Activated naive CD4-positive, alpha-beta T cell treated with anti-CD3 and anti-CD28 coated beads for 36 hours (primary cell): ENCODE measurements at regions of chr5 and their contacts with region 1.

Region 1: DNA sequence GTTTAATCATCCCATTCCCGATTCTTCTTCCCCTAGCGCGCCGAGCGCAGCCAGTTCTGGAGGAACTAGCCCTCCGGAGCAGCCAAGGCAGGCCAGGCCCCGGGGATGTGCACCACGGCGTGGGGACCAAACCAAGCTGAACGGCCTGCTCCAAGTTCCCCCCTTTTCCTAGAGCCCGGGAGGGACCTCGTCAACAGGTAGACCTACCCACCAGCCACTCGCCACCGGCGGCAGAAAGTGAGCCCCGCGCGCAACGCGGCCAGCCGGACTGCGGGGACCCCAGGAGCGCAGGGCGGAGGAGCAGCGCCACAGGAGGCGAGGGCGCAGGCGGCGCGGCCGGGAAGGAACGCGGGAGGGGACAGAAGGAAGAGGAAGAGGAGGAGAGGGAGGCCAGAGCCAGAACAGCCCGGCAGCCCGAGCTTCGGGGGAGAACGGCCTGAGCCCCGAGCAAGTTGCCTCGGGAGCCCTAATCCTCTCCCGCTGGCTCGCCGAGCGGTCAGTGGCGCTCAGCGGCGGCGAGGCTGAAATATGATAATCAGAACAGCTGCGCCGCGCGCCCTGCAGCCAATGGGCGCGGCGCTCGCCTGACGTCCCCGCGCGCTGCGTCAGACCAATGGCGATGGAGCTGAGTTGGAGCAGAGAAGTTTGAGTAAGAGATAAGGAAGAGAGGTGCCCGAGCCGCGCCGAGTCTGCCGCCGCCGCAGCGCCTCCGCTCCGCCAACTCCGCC is at the start of gene ISL1:
- DNase-seq: no peak
- H3K4me3 Mint-ChIP-seq: peak within 1 kb of the TSS; percentile 19
- H3K27ac Mint-ChIP-seq: no peak within 1 kb of the TSS
- H3K4me1 Mint-ChIP-seq: peaks cover 16% of the 10 kb centered on the region
- H3K27me3 Mint-ChIP-seq: peaks cover 91% of the 10 kb centered on the region
- total RNA-seq, gene ISL1: not detected

Region 2: GRCh38 chr5:50727149-50727496 is 655.8 kb before region 1 on chr5:
- CTCF ChIA-PET with region 1: no interaction called
- intact Hi-C with region 1: no loop called
- DNase-seq: peak; percentile 66
- H3K4me3 Mint-ChIP-seq: peak overlapping the region; percentile 19
- H3K27ac Mint-ChIP-seq: peak overlapping the region; percentile 75
- H3K4me1 Mint-ChIP-seq: peaks cover 63% of the 10 kb centered on the region
- H3K27me3 Mint-ChIP-seq: no peaks in the 10 kb centered on the region

Region 3: DNA sequence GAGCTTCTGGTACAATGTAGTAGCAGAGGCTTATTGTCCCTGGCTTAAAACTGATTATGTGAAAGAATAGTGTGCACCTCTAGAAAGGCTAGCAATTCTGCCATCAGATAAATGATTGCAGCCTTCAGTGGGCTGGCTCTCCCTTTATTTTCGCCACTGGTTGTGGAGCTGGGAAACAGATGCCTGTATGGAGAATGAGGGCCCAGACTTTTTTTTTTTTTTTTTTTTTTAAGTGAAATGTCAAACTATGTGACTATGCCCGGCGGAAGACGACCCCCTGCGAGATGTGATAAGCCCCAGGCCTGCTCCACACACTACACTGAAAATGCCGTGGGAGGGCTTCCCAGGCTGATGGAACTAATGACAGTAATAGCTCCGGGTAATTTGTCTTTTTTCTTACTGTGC is 29.0 kb after region 1 on chr5:
- CTCF ChIA-PET with region 1: no interaction called
- intact Hi-C with region 1: no loop called
- DNase-seq: no peak
- H3K4me3 Mint-ChIP-seq: no peak overlapping the region
- H3K27ac Mint-ChIP-seq: no peak overlapping the region
- H3K4me1 Mint-ChIP-seq: no peaks in the 10 kb centered on the region
- H3K27me3 Mint-ChIP-seq: no peaks in the 10 kb centered on the region

Region 4: DNA sequence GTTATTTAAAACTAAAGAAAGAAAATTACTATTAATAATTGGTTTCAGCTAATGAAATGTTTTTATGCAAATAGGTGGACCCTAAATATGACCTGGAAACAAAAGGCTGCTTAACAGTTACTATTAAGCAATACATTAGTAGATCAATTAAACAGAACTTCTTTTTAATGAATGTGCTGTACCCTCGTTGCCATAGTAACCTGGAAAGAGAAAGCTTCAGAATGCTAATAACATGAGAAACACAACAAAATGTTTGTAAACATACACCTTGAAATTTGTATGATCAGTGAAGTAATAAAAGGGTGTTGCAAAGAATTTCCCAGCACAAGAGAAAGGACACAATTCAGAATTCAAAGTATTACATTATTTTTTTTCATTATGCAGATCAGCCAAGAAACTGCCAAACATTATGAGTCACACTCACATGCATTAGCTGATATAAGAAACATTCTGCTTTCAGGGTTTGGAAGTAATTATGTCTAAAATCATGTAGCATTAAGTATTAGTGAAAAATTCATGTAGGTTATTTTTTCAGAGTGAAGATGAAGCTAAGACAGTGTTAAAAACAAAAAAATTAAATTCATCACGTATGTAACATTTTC is 348.6 kb after region 1 on chr5:
- CTCF ChIA-PET with region 1: no interaction called
- intact Hi-C with region 1: no loop called
- DNase-seq: no peak
- H3K4me3 Mint-ChIP-seq: no peak overlapping the region
- H3K27ac Mint-ChIP-seq: no peak overlapping the region
- H3K4me1 Mint-ChIP-seq: no peaks in the 10 kb centered on the region
- H3K27me3 Mint-ChIP-seq: no peaks in the 10 kb centered on the region

Region 5: DNA sequence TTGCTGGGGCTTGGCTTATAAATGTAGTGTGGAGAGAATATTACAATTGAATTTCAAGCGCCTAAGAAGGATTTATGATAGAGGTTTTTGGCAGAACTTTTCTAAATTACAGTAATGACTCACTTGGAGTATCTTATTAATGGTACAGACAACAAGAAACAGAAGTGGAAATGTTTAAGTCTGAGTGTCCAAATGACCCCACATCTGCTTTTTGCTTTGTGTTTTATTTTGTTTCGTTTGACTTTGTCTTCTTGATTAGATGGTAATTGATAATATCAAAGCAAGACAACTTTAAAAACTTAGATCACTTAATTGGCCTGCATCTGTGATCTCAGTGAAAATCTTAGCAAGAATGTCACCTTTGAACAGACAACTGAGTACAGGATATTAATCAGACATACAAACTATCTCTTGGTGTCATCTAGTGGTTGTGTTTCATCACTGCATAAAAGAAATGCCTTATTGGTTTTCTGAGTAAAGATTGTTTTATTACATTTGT is 577.7 kb after region 1 on chr5:
- CTCF ChIA-PET with region 1: no interaction called
- intact Hi-C with region 1: loop called (anchors 2 kb)
- DNase-seq: no peak
- H3K4me3 Mint-ChIP-seq: no peak overlapping the region
- H3K27ac Mint-ChIP-seq: no peak overlapping the region
- H3K4me1 Mint-ChIP-seq: no peaks in the 10 kb centered on the region
- H3K27me3 Mint-ChIP-seq: no peaks in the 10 kb centered on the region

Region 6: DNA sequence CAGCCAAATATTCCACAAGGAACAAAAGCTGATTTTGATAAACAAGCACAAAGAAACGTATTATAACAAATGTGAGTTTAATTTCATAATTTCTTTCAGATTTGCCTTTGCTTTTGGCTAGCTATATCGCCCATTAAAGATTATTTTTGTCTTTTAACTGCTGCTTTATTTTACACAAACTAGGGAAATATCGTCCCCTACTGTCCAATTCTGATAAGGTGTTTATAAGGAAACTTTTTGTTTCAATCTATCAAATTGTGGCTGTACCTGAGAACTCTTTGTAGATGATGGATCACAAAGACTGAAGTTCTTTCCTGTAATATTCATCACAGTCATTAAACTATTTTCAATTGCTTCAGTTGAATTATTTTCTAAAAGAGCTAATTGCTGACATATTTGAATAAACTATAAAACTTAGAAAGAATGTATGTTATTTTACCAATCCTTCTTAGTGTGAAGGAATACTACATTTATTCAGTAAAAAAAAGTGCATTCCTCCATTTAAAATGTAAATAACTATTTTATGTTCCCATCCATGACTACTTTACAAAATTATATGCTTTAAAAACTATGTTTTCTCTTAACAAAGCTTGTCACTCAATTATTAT is 973.5 kb after region 1 on chr5:
- CTCF ChIA-PET with region 1: no interaction called
- intact Hi-C with region 1: loop called (anchors 5 kb)
- DNase-seq: no peak
- H3K4me3 Mint-ChIP-seq: no peak overlapping the region
- H3K27ac Mint-ChIP-seq: no peak overlapping the region
- H3K4me1 Mint-ChIP-seq: no peaks in the 10 kb centered on the region
- H3K27me3 Mint-ChIP-seq: no peaks in the 10 kb centered on the region

Region 7: GRCh38 chr5:52657247-52657645 is 1274.3 kb after region 1 on chr5:
- CTCF ChIA-PET with region 1: interaction called, 4 read pairs
- intact Hi-C with region 1: loop called (anchors 1 kb)
- DNase-seq: no peak
- H3K4me3 Mint-ChIP-seq: no peak overlapping the region
- H3K27ac Mint-ChIP-seq: no peak overlapping the region
- H3K4me1 Mint-ChIP-seq: no peaks in the 10 kb centered on the region
- H3K27me3 Mint-ChIP-seq: peaks cover 6% of the 10 kb centered on the region